GM12878 (cell line): ENCODE measurements at regions of chr22 and their contacts with region 1.

Region 1: DNA sequence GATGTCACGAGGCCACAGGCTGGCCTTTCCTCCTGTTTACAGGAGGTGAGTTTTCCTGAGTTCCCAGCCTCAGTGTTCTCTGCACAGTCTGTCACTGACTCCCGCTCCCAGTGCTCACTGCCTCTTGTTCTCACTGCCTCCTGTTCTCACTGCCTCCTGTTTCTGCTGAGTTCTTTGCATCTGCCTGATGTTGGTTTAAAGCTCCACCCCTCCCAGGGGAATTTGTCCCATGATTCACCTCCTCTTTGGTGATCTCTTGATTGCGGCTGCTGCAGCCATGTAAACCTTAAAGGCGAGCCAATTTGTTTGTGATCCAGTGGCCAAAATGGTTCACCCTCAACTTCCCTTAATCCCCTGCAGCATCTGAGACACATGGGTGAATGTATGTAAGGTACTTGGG is 6.0 kb upstream of the TUBA8 start:
- DNase-seq: no peak
- ATAC-seq: peak; percentile 44
- H3K4me3 ChIP-seq: 0 out of 2 replicates have a peak overlapping the region, but pooled peaks have one; percentile 18
- H3K27ac ChIP-seq: peak overlapping the region; percentile 96
- H3K4me1 ChIP-seq: peaks cover 35% of the 10 kb centered on the region
- H3K27me3 ChIP-seq: no peaks in the 10 kb centered on the region
- CTCF ChIP-seq: no peak
- EP300 ChIP-seq: no peak
- POLR2A ChIP-seq: no peak
- RAD21 ChIP-seq: no peak

Region 2: DNA sequence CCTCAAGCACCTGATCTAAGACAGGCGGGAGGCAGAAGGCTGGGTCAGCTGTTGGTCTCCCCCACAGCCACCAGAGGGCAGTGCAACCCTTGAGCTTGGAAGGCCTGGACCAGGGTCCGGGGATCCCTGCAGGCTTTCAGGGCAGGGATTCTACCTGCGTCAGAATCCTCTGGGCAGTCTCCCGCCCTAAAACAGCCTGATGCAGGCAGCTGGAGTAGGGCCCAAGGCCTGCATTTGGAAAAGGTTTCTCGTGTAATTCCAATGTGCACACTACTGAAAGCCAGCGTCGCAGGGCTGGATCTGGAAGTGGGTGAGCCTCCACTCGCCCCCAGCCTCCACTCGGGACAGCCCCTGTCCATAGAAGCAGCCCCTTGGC is 362.1 kb before region 1 on chr22:
- CTCF ChIA-PET with region 1: no interaction called
- POLR2A ChIA-PET with region 1: no interaction called
- RAD21 ChIA-PET with region 1: no interaction called
- SMC1A ChIA-PET with region 1: no interaction called
- in situ Hi-C with region 1: no loop called
- intact Hi-C with region 1: no loop called
- DNase-seq: no peak
- ATAC-seq: peak; percentile 98
- H3K4me3 ChIP-seq: no peak overlapping the region
- H3K27ac ChIP-seq: no peak overlapping the region
- H3K4me1 ChIP-seq: peaks cover 7% of the 10 kb centered on the region
- H3K27me3 ChIP-seq: no peaks in the 10 kb centered on the region
- CTCF ChIP-seq: peak; percentile 84 to 94 (median 90)
- EP300 ChIP-seq: no peak
- POLR2A ChIP-seq: no peak; the same call in 1 of the 2 replicates
- RAD21 ChIP-seq: peak; percentile 98

Region 3: DNA sequence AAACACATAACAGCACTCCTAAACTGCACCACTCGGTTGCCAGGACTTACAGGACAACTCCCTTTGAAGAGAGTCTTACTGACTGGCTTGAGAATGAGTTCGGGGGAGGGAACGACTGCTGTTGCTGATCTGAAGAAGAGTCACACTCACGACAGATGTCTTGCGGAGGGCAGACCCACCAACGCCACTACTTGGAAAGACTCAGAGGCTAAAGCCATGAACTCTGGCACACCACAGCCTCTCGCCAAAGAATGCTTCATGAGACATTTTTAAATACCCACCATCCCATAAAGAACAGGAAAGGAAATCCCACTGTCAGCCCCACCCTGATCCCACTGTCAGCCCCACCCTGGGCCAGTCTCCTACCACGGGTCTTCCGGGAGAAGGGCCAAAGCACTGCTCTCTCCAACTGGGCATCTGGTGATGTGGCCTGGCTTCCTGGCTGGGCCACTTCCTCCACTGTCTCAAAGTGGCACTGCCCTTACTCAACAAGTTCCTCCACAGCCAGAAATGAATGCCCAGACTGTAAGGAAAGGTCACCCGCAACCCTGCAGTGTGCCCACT is 153.8 kb before region 1 on chr22:
- CTCF ChIA-PET with region 1: no interaction called
- POLR2A ChIA-PET with region 1: no interaction called
- RAD21 ChIA-PET with region 1: no interaction called
- SMC1A ChIA-PET with region 1: no interaction called
- in situ Hi-C with region 1: no loop called
- intact Hi-C with region 1: no loop called
- DNase-seq: no peak
- ATAC-seq: no peak
- H3K4me3 ChIP-seq: no peak overlapping the region
- H3K27ac ChIP-seq: no peak overlapping the region
- H3K4me1 ChIP-seq: peaks cover 20% of the 10 kb centered on the region
- H3K27me3 ChIP-seq: no peaks in the 10 kb centered on the region
- CTCF ChIP-seq: no peak
- EP300 ChIP-seq: no peak
- POLR2A ChIP-seq: no peak
- RAD21 ChIP-seq: no peak

Region 4: GRCh38 chr22:17972385-17973181 is 132.0 kb before region 1 on chr22:
- CTCF ChIA-PET with region 1: no interaction called
- POLR2A ChIA-PET with region 1: no interaction called
- RAD21 ChIA-PET with region 1: no interaction called
- SMC1A ChIA-PET with region 1: no interaction called
- in situ Hi-C with region 1: no loop called
- intact Hi-C with region 1: loop called (anchors 10 kb)
- DNase-seq: no peak
- ATAC-seq: no peak
- H3K4me3 ChIP-seq: no peak overlapping the region
- H3K27ac ChIP-seq: no peak overlapping the region
- H3K4me1 ChIP-seq: peaks cover 28% of the 10 kb centered on the region
- H3K27me3 ChIP-seq: no peaks in the 10 kb centered on the region; a peak in 1 of 4 replicates
- CTCF ChIP-seq: no peak
- EP300 ChIP-seq: no peak
- POLR2A ChIP-seq: no peak
- RAD21 ChIP-seq: no peak

Region 5: GRCh38 chr22:18091916-18092526 is 12.5 kb before region 1 on chr22:
- CTCF ChIA-PET with region 1: interaction called, 6 read pairs
- POLR2A ChIA-PET with region 1: interaction called, 4 read pairs
- RAD21 ChIA-PET with region 1: interaction called, 17 read pairs
- SMC1A ChIA-PET with region 1: interaction called, 20 read pairs
- in situ Hi-C with region 1: no loop called
- intact Hi-C with region 1: loop called (anchors 1 kb)
- DNase-seq: no peak
- ATAC-seq: peak; percentile 64
- H3K4me3 ChIP-seq: peak overlapping the region; percentile 47; the same call in 1 of the 2 replicates
- H3K27ac ChIP-seq: peak overlapping the region; percentile 90
- H3K4me1 ChIP-seq: peaks cover 53% of the 10 kb centered on the region
- H3K27me3 ChIP-seq: no peaks in the 10 kb centered on the region
- CTCF ChIP-seq: no peak
- EP300 ChIP-seq: no peak
- POLR2A ChIP-seq: peak; percentile 54; the same call in 1 of the 2 replicates
- RAD21 ChIP-seq: no peak